Sciatic nerve (tissue), 2 donors: ENCODE measurements at regions of chr12 and their contacts with region 1.

Region 1: GRCh38 chr12:50055831-50056638 is 1.4 kb upstream of the ASIC1 start:
- DNase-seq: no peak
- ATAC-seq: peak; percentile 72

Region 2: DNA sequence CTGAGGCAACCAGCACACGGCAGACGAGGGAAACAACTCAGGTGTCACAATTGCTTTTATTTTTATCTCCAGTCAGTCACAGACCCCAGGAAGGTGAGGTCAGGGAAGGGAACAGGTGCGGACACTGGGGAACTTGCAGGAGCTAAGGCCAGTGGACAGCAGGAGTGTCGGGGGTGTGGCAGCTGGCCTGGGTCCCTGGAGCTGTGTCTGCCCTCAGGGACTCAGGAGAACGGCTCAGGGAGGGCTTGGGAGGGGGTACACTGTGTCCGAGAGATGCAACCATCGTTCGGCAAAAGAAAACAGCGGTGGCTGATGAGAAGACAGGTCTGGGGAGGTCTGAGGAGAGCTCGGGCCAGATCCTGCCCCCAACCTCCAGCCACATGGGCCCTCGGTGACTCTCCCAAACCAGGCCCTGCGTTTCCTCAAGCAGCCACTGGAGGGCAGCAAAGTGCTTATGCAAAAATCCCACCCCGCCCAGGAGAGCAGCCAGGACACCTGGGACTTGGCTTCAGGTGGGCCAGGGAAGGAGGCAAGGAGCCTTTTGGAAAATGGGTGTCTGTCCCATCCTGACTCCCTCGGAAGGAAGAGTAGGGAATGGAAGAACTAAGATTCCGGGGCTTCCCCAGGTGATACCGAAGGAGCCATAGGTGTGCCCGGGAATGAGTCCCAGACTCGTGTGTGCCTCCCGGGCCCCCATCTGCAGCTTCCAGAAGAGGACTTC is 189.0 kb before region 1 on chr12:
- intact Hi-C with region 1: loop called (anchors 10 kb)
- DNase-seq: peak; percentile 87
- ATAC-seq: peak; percentile 48

Region 3: DNA sequence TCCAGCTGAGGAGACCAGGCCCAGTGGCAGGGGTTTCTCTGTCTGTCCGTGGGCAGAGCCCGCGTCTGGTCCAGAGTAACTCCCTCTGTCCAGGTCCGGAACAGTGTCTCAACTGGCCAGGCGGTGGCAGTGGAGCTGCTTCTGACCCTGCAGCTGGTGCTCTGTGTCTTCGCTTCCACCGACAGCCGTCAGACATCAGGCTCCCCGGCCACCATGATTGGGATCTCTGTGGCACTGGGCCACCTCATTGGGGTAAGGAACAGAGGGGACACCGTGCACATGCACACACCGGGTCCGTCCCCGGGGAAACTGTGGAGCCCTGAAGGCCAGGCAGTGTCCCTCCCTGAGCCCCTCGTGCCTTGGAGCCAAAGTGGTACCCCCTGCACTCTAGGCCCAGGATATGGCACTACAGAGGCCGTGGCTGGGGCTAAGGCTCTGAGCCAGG is 81.8 kb before region 1 on chr12:
- intact Hi-C with region 1: loop called (anchors 5 kb)
- DNase-seq: peak; percentile 82
- ATAC-seq: peak; percentile 83

Region 4: DNA sequence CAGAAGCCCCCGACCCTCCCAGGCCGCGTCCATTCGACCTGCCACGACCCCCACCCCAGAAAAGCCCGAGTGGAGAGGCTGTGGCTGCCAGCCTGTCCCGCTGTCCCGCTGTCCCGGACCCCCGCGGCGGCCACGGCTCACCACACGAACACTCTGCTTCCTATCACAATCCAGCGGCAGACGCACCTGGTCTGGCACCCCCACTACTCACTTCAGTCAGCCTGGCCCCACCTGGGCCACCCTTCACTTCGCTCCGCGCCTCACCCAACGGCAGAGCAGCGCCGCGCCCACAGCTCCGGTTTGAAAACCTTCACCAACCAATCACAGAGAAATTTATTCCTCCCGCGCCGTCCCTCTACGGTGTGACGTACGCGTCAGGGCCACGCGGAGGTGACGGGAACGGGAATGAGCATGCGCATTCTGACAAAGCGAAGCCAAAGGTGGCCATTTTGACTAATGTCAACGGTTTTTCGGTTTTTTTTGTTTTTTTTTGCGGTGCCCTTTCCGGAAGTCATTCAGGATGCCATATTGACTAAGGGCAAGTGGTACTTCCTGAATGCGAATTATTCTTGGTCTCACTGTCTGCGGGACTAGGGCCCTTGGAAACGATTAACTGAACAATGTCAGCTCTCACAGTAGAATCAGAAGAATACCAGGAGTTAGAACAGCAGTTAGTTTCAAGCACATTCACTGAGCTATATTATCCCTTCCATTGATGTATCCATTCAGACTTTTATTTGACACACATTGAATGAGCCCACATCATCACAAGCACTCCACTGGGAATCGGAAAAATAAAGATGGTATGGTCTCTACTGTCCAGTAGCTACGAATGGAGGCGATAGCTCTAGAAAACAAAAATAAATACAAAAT is 30.6 kb before region 1 on chr12 and contains the start of gene RACGAP1:
- intact Hi-C with region 1: no loop called
- DNase-seq: peak; percentile 95
- ATAC-seq: peak; percentile 99
- total RNA-seq, gene RACGAP1: 15.0 TPM

Region 5: GRCh38 chr12:51395283-51396230 is 1339.5 kb after region 1 on chr12:
- intact Hi-C with region 1: no loop called
- DNase-seq: no peak
- ATAC-seq: no peak